WTC11 (cell line): ENCODE measurements at regions of chr2 and their contacts with region 1.

Region 1: DNA sequence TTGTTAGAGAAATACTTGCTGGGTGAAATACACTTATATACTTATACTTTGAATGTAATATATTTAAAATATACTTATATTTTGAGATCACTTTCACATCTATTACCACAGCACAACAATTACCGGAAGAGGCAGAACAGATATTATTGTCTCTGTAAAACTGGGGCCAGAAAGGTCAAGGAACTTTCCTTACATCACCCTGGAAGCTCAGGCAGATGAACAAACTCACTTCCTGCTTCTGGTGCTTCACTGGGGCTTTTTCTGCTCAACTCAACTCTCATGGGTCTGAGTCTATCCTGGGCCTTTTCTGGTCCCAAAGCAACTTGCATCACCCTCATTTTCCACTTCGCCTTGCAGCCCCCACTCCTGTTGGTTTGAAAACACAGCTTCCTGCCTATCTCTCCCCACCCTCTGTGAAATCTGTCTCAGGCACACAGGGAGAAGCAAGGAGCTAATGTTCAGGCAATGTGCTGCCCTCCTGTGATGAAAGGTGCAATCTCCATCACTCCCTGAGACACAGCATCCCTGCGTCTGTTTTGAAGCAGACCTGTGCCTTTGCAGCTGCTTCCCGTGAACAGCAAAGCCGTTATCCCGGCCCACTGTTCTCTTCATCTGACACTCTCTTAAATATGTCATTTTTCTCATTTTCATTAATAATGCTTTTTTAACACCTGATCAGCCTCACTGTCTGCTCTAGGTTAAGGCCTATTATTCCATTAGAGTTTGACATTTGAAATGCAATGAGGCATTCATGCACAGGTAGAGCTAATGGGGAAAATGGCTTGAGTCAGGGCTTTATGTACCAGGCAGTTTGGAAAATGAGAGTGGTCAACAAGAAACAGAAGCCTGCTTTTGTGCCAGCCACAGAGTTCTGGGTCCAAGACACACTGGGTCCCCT is 251.9 kb upstream of the CHAC2 start:
- DNase-seq: peak; percentile 29
- ATAC-seq: peak; percentile 72
- H3K4me3 Mint-ChIP-seq: no peak overlapping the region
- H3K27ac Mint-ChIP-seq: no peak overlapping the region
- H3K4me1 Mint-ChIP-seq: peaks cover 16% of the 10 kb centered on the region
- H3K27me3 Mint-ChIP-seq: no peaks in the 10 kb centered on the region
- CTCF ChIP-seq: no peak

Region 2: GRCh38 chr2:53504507-53504906 is 11.2 kb before region 1 on chr2:
- CTCF ChIA-PET with region 1: interaction called, 11 read pairs
- POLR2A ChIA-PET with region 1: interaction called, 3 read pairs
- DNase-seq: no peak
- ATAC-seq: peak; percentile 77
- H3K4me3 Mint-ChIP-seq: no peak overlapping the region
- H3K27ac Mint-ChIP-seq: no peak overlapping the region; the same call in 1 of the 2 replicates
- H3K4me1 Mint-ChIP-seq: peaks cover 26% of the 10 kb centered on the region
- H3K27me3 Mint-ChIP-seq: no peaks in the 10 kb centered on the region
- CTCF ChIP-seq: no peak